Activated CD8-positive, alpha-beta T cell treated with anti-CD3 and anti-CD28 coated beads, Interleukin-2, amount 10 ng/mL, durations not matched to agents 7 days and 5 days (primary cell): ENCODE measurements at regions of chr10 and their contacts with region 1.

Region 1: GRCh38 chr10:73886085-73886529 is 11.8 kb upstream of the CAMK2G start:
- DNase-seq: peak; percentile 81
- ATAC-seq: peak; percentile 93
- H3K4me3 Mint-ChIP-seq: no peak overlapping the region
- H3K27ac Mint-ChIP-seq: no peak overlapping the region
- H3K4me1 Mint-ChIP-seq: peaks cover 7% of the 10 kb centered on the region
- H3K27me3 Mint-ChIP-seq: peaks cover 4% of the 10 kb centered on the region

Region 2: DNA sequence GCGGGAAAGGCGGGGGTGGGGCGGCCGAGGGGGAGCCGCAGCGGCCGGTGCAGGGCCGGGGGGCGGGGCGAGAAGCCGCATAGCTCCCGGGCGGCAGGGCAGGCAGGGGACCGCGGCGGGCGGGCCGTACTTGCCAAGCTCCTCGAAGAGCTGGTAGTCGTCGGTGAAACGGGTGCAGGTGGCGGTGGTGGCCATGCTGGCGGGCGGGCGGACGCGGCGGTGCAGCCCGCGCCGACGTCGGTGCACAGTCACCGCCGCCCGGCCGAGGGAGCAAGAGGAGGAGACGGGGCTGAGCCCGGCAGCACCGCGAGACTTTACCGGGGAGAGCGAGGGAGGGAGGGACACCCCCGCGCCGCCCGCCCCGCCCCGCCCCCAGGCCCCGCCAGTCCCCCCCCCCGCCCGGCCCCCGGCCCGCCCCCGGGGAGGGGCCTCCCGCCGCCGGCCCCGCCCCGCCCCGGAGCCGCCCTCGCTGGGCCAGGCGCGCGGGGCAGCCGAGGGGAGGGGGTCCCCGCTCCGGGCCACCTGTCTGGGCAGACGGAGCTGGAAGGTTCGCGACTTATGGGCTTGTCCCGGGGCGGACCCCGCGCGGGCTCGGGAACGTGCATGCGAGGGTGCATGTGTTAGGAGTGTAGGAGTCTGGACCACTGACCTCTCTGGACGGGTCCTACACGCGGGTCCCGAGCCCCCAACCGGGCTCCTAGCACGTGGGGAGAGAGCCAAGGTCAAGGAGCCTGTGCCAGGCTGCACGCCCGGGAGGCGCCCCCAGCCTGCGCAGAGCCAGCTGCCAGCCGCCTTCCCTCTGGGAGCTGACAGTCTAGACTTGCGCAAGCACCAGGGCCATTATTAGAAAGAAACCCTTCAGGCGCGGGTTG is 11.6 kb before region 1 on chr10 and contains the start of gene CAMK2G:
- CTCF ChIA-PET with region 1: interaction called, 37 read pairs
- POLR2A ChIA-PET with region 1: no interaction called
- DNase-seq: peak; percentile 89
- ATAC-seq: peak; percentile 93
- H3K4me3 Mint-ChIP-seq: peak within 1 kb of the TSS; percentile 82
- H3K27ac Mint-ChIP-seq: peak within 1 kb of the TSS; percentile 87
- H3K4me1 Mint-ChIP-seq: peaks cover 74% of the 10 kb centered on the region
- H3K27me3 Mint-ChIP-seq: no peaks in the 10 kb centered on the region
- total RNA-seq, gene CAMK2G: 43.2 to 48.4 TPM

Region 3: DNA sequence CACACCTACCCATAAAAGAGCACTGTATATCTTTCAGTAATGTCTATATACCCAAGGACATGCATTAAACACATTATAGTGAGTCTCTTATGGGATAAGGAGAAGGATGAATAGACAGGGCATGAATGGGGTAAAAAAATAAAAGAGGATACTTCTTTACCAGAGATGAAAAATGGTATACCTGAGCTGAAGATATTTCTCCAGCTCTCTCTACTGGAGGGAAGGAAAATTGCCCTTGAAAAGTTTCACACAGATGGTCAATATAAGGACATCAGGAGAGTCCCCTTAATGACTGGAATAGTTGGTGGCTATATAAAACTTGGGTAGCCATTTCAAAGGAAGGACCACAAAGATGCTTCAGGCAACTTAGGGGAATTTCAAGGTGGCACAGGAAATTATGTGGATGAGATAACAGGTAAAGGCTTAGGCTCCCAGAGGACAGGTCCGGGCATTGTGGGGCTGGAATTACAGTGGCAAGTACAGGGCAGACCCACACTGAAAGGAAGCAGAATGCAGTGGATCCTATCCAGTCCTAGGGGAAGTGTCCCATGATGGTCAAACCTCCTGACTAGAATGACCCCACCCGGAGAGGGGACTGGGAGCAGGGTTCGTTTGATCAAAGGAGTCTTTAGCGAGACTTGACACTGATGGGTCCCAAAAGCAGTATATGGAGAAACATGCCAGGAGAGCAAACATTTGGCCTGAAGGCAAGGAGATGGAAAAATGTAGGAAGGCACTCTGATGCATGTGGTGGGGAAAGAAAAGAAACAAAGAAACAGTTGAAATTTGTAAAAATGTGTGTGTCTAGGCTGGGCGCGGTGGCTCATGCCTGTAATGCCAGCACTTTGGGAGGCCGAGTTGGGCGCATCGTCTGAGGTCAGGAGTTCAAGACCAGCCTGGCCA is 60.4 kb after region 1 on chr10:
- CTCF ChIA-PET with region 1: interaction called, 408 read pairs
- POLR2A ChIA-PET with region 1: interaction called, 6 read pairs
- DNase-seq: no peak
- ATAC-seq: no peak
- H3K4me3 Mint-ChIP-seq: no peak overlapping the region
- H3K27ac Mint-ChIP-seq: no peak overlapping the region
- H3K4me1 Mint-ChIP-seq: no peaks in the 10 kb centered on the region
- H3K27me3 Mint-ChIP-seq: peaks cover 27% of the 10 kb centered on the region

Region 4: GRCh38 chr10:73998929-73999691 is 113.0 kb after region 1 on chr10:
- CTCF ChIA-PET with region 1: interaction called, 10 read pairs
- POLR2A ChIA-PET with region 1: no interaction called
- DNase-seq: peak; percentile 31
- ATAC-seq: no peak
- H3K4me3 Mint-ChIP-seq: peak overlapping the region; percentile 90
- H3K27ac Mint-ChIP-seq: peak overlapping the region; percentile 83
- H3K4me1 Mint-ChIP-seq: peaks cover 44% of the 10 kb centered on the region
- H3K27me3 Mint-ChIP-seq: peaks cover 4% of the 10 kb centered on the region

Region 5: DNA sequence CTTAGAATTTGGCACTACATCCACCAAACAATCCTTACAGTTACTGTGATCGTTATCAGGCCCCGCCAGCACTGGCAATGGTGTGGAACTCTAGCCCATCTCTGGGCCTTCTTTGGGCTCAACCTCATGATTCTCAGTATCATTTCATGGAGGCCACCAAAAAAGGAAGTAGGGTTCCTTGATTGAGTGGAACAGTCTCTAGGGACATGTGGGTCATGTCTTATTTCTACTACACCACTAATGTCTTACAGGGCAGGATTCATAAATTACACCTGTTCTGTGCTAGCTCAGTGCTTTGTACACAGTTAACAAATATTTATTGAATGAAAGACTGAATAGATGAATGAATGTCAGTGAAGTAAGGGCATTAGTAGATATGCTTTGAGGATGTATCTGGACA is 210.7 kb after region 1 on chr10:
- CTCF ChIA-PET with region 1: interaction called, 48 read pairs
- POLR2A ChIA-PET with region 1: no interaction called
- DNase-seq: no peak
- ATAC-seq: no peak
- H3K4me3 Mint-ChIP-seq: no peak overlapping the region
- H3K27ac Mint-ChIP-seq: no peak overlapping the region
- H3K4me1 Mint-ChIP-seq: peaks cover 4% of the 10 kb centered on the region
- H3K27me3 Mint-ChIP-seq: no peaks in the 10 kb centered on the region